ENCODE measurements at regions of chr5 and their contacts with region 1.

Region 1: GRCh38 chr5:132410451-132411381 is 41.2 kb downstream of the SLC22A5 start:
- DNase-seq: peak; percentile 67 to 93 (median 79)
- ATAC-seq: peak; percentile 70 to 77 (median 74)
- H3K4me3 ChIP-seq: peak overlapping the region; percentile 87 to 94
- H3K4me3 Mint-ChIP-seq: peak overlapping the region; percentile 98 to 99 (median 98)
- H3K27ac ChIP-seq: peak overlapping the region; percentile 98
- H3K27ac Mint-ChIP-seq: peak overlapping the region; percentile 99
- H3K4me1 ChIP-seq: peaks cover 19 to 52% of the 10 kb centered on the region in 2 experiments
- H3K4me1 Mint-ChIP-seq: peaks cover 73 to 85% (median 84%) of the 10 kb centered on the region in 3 donors
- H3K27me3 ChIP-seq: no peaks in the 10 kb centered on the region
- H3K27me3 Mint-ChIP-seq: no peaks in the 10 kb centered on the region

Region 2: DNA sequence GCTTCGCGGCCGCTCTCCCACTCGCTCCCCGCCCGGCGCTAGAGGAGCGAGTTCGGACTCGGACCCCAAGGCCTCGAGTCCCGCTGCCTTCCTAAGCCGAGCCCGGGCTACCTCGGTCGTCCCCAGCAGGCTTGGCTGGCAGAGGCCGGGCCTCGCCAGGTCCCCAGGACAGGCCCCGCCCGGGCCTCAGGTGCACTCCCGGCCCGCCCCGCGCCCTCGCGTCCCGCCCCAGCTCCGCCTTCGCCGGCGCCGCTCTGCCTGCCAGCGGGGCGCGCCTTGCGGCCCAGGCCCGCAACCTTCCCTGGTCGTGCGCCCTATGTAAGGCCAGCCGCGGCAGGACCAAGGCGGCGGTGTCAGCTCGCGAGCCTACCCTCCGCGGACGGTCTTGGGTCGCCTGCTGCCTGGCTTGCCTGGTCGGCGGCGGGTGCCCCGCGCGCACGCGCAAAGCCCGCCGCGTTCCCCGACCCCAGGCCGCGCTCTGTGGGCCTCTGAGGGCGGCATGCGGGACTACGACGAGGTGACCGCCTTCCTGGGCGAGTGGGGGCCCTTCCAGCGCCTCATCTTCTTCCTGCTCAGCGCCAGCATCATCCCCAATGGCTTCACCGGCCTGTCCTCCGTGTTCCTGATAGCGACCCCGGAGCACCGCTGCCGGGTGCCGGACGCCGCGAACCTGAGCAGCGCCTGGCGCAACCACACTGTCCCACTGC is 41.1 kb before region 1 on chr5 and contains the start of gene SLC22A5:
- CTCF ChIA-PET with region 1: no interaction called
- POLR2A ChIA-PET with region 1: no interaction called
- DNase-seq: peak; percentile 47 to 81 (median 65)
- ATAC-seq: peak; percentile 93 to 97 (median 96)
- H3K4me3 ChIP-seq: peak within 1 kb of the TSS; percentile 61 to 67
- H3K4me3 Mint-ChIP-seq: peak within 1 kb of the TSS; percentile 78 to 83 (median 81)
- H3K27ac ChIP-seq: peak within 1 kb of the TSS; percentile 77
- H3K27ac Mint-ChIP-seq: peak within 1 kb of the TSS; percentile 77
- H3K4me1 ChIP-seq: peaks cover 2 to 23% of the 10 kb centered on the region in 2 experiments
- H3K4me1 Mint-ChIP-seq: peaks cover 25 to 31% (median 29%) of the 10 kb centered on the region in 3 donors
- H3K27me3 ChIP-seq: no peaks in the 10 kb centered on the region
- H3K27me3 Mint-ChIP-seq: no peaks in the 10 kb centered on the region
- total RNA-seq, gene SLC22A5: 4.8 to 14.0 (median 7.6) TPM

Region 3: DNA sequence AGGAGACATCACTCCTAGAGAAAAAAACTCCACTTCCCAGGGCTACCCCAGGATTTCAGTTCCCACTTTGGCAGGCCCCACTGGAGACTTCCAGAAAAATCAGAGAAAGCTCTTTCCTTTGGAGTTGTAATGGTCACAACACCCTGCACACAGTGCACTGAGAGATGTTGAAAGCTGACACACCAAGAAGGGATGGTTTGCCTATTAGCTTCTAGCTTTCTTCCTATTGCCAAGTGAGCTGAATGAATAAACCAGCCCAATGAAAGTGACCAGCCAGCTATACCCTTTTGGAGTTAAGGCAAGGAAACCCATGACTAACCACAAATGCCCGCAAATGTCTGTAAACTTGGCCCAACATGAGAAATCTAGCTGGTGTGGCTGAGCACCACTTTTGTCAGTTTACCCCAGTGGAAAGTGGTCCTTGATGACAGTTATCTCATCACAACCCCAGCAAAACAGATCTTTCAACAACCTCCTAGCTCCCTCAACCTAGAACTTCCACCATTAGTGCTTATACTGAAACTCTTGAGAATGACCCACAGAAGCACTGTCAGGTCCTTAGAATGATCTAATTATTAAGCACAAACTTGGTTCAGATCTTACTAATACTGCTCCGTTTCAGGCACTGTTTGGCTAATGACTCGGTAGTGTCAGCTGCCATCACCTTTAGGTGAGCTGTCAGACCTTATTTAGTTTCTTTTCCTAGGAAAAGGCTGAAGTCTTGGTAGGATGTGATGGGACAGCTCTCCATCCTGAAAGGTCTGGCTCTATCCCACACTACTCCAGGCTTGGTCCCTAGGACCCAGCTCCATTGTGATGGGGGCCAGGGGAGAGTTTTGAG is 68.6 kb after region 1 on chr5:
- CTCF ChIA-PET with region 1: interaction called in 1 of 2 experiments, 3 read pairs
- POLR2A ChIA-PET with region 1: interaction called, 9 to 16 read pairs
- DNase-seq: peak in 2 of 35 experiments; percentile 0 to 43
- ATAC-seq: no peak
- H3K4me3 ChIP-seq: no peak overlapping the region
- H3K4me3 Mint-ChIP-seq: peak overlapping the region in 1 of 3 donors; percentile 13
- H3K27ac ChIP-seq: peak overlapping the region; percentile 43
- H3K27ac Mint-ChIP-seq: peak overlapping the region; percentile 83 to 87
- H3K4me1 ChIP-seq: peaks cover 3 to 94% of the 10 kb centered on the region in 2 experiments
- H3K4me1 Mint-ChIP-seq: peaks cover 81 to 87% (median 83%) of the 10 kb centered on the region in 3 donors
- H3K27me3 ChIP-seq: no peaks in the 10 kb centered on the region
- H3K27me3 Mint-ChIP-seq: no peaks in the 10 kb centered on the region

Region 4: GRCh38 chr5:132495667-132496190 is 85.0 kb after region 1 on chr5:
- CTCF ChIA-PET with region 1: interaction called in 1 of 2 experiments, 9 read pairs
- POLR2A ChIA-PET with region 1: interaction called, 6 to 14 read pairs
- DNase-seq: peak in 33 of 35 experiments; percentile 47 to 78 (median 61)
- ATAC-seq: peak; percentile 35 to 46 (median 38)
- H3K4me3 ChIP-seq: peak overlapping the region; percentile 61 to 93
- H3K4me3 Mint-ChIP-seq: peak overlapping the region; percentile 92 to 96 (median 93)
- H3K27ac ChIP-seq: peak overlapping the region; percentile 92
- H3K27ac Mint-ChIP-seq: peak overlapping the region; percentile 96 to 99
- H3K4me1 ChIP-seq: peaks cover 26 to 80% of the 10 kb centered on the region in 2 experiments
- H3K4me1 Mint-ChIP-seq: peaks cover 69 to 76% (median 74%) of the 10 kb centered on the region in 3 donors
- H3K27me3 ChIP-seq: no peaks in the 10 kb centered on the region
- H3K27me3 Mint-ChIP-seq: no peaks in the 10 kb centered on the region